HEK293 (cell line): ENCODE measurements at regions of chr10 and their contacts with region 1.

Region 1: DNA sequence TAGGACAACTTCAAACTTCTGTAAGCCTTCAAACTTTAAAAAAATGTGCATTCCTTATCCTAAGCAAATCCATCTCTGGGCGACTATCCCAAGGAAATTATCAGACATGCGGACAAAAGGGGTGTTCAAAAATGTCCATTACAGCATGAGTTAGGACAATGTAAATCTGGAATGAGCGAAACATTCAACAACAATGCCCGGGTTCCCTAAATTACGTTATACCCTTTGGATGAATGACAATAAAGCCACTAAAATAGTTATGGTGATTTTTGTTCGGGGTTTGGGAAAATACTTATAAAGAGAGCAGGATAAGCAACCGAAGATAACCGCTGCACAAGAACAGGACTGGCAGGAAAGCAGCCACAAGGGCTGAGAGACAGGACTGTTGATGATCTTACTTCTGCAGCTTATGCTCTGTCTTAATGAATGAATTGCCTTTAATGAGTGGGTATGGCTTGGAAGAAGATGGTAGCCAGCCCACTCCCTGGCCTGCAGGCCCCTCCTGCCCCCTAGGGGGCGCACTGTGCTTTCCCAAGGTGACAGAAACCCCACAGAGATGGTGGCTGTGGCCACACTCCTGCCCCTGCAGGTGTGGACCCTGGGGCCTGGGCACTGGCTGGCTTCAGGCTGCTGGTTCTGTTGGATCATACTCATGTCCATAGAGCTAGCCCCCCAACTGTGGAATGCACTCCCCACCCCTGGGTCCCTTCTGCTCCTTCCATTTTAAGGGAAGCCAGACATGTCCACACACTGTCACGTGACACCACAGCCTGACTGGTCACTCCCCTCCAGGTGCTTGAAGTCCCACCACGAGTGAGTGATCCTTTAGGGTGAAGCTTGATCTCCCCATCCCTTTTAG is 45.0 kb downstream of the ZCCHC24 start:
- H3K4me3 ChIP-seq: no peak overlapping the region
- H3K27ac ChIP-seq: no peak overlapping the region
- H3K4me1 ChIP-seq: peaks cover 9% of the 10 kb centered on the region
- CTCF ChIP-seq: peak; percentile 46

Region 2: DNA sequence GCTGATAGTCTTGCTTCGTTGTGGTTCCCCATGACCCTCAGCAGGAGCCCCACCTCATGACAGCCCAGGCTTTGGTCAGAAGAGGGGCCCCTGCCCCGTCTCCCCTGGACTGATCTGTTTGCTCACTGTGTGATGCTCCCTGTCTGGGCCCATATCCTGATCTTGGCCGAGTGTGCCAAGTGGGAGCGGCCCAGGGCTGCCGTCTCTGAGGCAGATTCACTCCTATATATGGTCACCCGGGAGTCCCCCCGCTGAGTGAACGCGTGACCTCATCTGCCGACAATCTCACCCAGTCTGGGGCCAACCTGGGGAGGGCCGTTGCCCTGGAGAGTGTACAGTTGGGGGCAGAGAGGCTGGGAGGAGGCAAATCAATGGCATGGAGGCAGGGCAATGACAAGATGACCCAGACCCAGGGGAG is 18.6 kb before region 1 on chr10:
- CTCF ChIA-PET with region 1: interaction called, 11 read pairs
- POLR2A ChIA-PET with region 1: no interaction called
- H3K4me3 ChIP-seq: no peak overlapping the region
- H3K27ac ChIP-seq: no peak overlapping the region
- H3K4me1 ChIP-seq: peaks cover 4% of the 10 kb centered on the region
- CTCF ChIP-seq: no peak

Region 3: DNA sequence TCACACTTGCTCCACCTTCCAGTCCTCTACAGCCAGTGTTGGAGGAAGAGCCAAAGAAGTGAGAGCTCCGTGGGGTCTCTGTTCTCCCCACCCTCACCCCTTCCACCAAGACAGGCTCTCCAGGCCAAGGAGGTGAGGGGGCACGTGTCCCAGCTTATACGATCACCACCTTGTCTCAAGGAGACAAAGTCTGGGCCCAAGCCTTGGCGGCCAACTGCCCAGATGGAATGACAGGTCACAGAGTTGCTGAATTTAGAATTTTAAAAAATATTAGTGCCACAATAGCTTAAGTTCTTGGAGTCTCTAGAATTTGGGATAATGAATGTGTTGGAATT is 13.6 kb after region 1 on chr10:
- CTCF ChIA-PET with region 1: interaction called, 10 read pairs
- POLR2A ChIA-PET with region 1: no interaction called
- H3K4me3 ChIP-seq: no peak overlapping the region
- H3K27ac ChIP-seq: no peak overlapping the region
- H3K4me1 ChIP-seq: no peaks in the 10 kb centered on the region
- CTCF ChIP-seq: no peak

Region 4: DNA sequence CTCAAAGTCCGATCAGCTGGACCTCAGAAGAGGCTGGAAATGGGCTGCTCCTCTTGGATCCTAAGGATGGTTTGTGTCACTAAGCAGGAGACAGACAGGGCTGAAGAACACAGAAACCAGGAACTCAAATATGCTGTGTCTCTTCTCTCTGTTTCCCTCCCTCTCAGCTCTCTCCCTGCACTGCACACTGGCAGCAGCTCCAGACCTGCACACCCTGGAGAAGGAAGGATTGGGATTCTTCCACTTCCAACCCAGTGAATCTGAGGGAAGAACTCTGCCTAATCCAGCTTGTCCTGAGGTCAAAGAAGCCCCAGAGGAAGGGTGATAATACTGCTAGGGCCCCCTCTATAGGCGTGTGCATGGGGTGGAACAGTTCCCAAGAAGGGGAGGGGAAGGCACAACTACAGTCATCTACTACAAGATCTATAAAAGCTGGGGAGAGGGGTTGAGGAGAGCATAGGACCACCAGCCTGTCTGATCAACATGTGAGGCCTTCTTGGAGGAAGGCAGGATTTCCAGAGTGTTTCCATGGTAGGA is 67.7 kb after region 1 on chr10:
- CTCF ChIA-PET with region 1: interaction called, 15 read pairs
- POLR2A ChIA-PET with region 1: no interaction called
- H3K4me3 ChIP-seq: no peak overlapping the region
- H3K27ac ChIP-seq: no peak overlapping the region
- H3K4me1 ChIP-seq: no peaks in the 10 kb centered on the region
- CTCF ChIP-seq: no peak

Region 5: GRCh38 chr10:79475119-79475653 is 74.8 kb after region 1 on chr10:
- CTCF ChIA-PET with region 1: interaction called, 10 read pairs
- POLR2A ChIA-PET with region 1: no interaction called
- H3K4me3 ChIP-seq: no peak overlapping the region
- H3K27ac ChIP-seq: no peak overlapping the region
- H3K4me1 ChIP-seq: no peaks in the 10 kb centered on the region
- CTCF ChIP-seq: no peak

Region 6: GRCh38 chr10:79487296-79488194 is 87.2 kb after region 1 on chr10:
- CTCF ChIA-PET with region 1: interaction called, 16 read pairs
- POLR2A ChIA-PET with region 1: no interaction called
- H3K4me3 ChIP-seq: no peak overlapping the region
- H3K27ac ChIP-seq: no peak overlapping the region
- H3K4me1 ChIP-seq: no peaks in the 10 kb centered on the region
- CTCF ChIP-seq: 0 out of 2 replicates have a peak, but pooled peaks have one; percentile 21